ENCODE measurements at regions of chr6 and their contacts with region 1.

Region 1: GRCh38 chr6:37018198-37019064 is 13.0 kb downstream of the FGD2 start:
- DNase-seq: peak; percentile 96
- ATAC-seq: peak; percentile 95
- H3K4me3 Mint-ChIP-seq: no peak overlapping the region
- H3K27ac Mint-ChIP-seq: peak overlapping the region; percentile 62
- H3K4me1 Mint-ChIP-seq: peaks cover 56% of the 10 kb centered on the region
- H3K27me3 Mint-ChIP-seq: no peaks in the 10 kb centered on the region

Region 2: DNA sequence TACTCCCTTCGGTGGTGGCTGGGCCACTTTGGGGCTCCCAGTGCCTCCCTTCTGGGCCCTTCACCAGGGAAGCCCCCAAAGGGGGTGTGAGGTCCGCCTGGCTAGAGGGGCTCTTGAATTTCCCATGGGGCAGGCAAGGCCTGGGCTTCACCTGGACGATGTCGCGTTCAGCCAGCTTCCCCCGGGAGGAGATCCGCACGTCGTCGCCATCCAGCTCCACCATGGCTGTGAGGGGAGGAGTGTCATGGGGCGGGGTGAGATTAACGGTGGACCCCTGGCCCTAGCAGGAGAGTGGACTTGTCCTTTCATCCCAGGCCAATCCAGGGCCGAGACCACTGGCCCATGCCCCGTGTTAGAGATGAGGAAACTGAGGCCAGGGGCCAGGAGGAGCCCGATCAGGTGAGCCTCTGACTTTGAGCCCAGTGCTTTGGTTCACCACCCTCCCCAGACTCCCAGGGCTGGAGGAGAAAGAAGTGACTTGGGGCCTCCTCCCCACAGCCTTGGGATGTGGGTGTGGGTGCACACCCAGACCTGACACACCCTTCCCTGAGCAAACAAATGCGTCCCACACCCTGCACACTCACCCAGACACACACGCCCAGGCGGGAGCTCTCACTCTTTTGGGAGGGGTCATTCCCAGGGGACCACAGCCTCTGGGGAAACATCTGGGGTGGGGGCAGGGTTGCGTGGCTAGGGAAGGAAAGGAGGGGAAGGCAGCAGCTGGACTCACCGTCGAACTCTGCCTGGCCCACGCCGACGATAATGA is 274.7 kb before region 1 on chr6:
- CTCF ChIA-PET with region 1: no interaction called
- POLR2A ChIA-PET with region 1: no interaction called
- DNase-seq: no peak
- ATAC-seq: no peak
- H3K4me3 Mint-ChIP-seq: no peak overlapping the region
- H3K27ac Mint-ChIP-seq: no peak overlapping the region
- H3K4me1 Mint-ChIP-seq: peaks cover 17% of the 10 kb centered on the region
- H3K27me3 Mint-ChIP-seq: no peaks in the 10 kb centered on the region

Region 3: DNA sequence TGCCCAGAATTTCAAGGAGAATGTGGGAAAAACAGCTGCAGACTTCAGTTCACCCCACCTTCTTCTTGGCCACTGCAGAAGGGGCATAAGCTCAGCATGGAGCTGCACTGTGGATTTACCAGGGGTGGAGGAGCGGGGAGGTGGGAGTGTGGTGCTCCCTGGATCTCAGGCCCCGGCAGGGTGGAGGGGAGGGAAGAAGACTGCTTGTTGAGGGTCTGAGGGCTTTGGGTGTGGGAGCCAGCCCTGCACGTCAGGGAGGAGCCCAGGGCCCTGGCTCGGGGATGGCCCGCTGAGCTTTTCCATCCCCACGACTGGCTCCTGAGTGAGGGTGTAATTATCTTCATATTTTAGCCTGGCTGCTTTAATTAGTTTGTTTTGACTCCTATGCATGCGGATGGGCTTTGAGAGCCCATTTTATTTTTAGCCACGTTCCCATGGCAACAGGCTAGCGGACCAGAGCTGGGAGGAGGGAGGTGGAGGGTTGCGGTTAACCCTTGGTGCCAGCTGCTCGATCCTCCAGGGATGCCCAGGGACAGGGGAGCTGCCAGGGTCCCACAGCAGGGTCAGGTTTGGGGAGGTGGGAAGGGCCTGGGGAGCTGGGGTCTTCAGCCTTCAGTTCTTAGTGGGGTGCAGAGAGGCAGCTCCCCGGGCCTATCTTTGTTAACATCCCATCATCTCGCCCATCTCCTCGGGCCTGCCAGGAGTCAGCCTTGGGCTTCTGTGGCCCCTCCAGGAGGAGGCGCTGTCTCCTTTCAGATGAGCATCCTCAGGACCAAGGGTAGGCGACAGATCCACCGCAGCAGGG is 252.6 kb before region 1 on chr6:
- CTCF ChIA-PET with region 1: interaction called, 183 read pairs
- POLR2A ChIA-PET with region 1: interaction called, 6 read pairs
- DNase-seq: peak; percentile 90
- ATAC-seq: peak; percentile 90
- H3K4me3 Mint-ChIP-seq: no peak overlapping the region
- H3K27ac Mint-ChIP-seq: peak overlapping the region; percentile 14
- H3K4me1 Mint-ChIP-seq: peaks cover 49% of the 10 kb centered on the region
- H3K27me3 Mint-ChIP-seq: no peaks in the 10 kb centered on the region

Region 4: GRCh38 chr6:36885461-36886401 is 132.7 kb before region 1 on chr6 and contains the start of gene C6orf89:
- CTCF ChIA-PET with region 1: interaction called, 176 read pairs
- POLR2A ChIA-PET with region 1: interaction called, 19 read pairs
- DNase-seq: peak; percentile 99
- ATAC-seq: peak; percentile 100
- H3K4me3 Mint-ChIP-seq: peak within 1 kb of the TSS; percentile 91
- H3K27ac Mint-ChIP-seq: peak within 1 kb of the TSS; percentile 87
- H3K4me1 Mint-ChIP-seq: peaks cover 35% of the 10 kb centered on the region
- H3K27me3 Mint-ChIP-seq: no peaks in the 10 kb centered on the region
- total RNA-seq, gene C6orf89: 40.0 to 41.1 TPM

Region 5: GRCh38 chr6:36979347-36979742 is 39.1 kb before region 1 on chr6:
- CTCF ChIA-PET with region 1: interaction called, 70 read pairs
- POLR2A ChIA-PET with region 1: interaction called, 4 read pairs
- DNase-seq: peak; percentile 67
- ATAC-seq: peak; percentile 67
- H3K4me3 Mint-ChIP-seq: no peak overlapping the region
- H3K27ac Mint-ChIP-seq: peak overlapping the region; percentile 31
- H3K4me1 Mint-ChIP-seq: peaks cover 34% of the 10 kb centered on the region
- H3K27me3 Mint-ChIP-seq: no peaks in the 10 kb centered on the region

Region 6: GRCh38 chr6:37038292-37039198 is 20.1 kb after region 1 on chr6:
- CTCF ChIA-PET with region 1: interaction called, 506 read pairs
- POLR2A ChIA-PET with region 1: interaction called, 3 read pairs
- DNase-seq: no peak
- ATAC-seq: no peak
- H3K4me3 Mint-ChIP-seq: no peak overlapping the region
- H3K27ac Mint-ChIP-seq: peak overlapping the region; percentile 71
- H3K4me1 Mint-ChIP-seq: peaks cover 72% of the 10 kb centered on the region
- H3K27me3 Mint-ChIP-seq: no peaks in the 10 kb centered on the region

Region 7: DNA sequence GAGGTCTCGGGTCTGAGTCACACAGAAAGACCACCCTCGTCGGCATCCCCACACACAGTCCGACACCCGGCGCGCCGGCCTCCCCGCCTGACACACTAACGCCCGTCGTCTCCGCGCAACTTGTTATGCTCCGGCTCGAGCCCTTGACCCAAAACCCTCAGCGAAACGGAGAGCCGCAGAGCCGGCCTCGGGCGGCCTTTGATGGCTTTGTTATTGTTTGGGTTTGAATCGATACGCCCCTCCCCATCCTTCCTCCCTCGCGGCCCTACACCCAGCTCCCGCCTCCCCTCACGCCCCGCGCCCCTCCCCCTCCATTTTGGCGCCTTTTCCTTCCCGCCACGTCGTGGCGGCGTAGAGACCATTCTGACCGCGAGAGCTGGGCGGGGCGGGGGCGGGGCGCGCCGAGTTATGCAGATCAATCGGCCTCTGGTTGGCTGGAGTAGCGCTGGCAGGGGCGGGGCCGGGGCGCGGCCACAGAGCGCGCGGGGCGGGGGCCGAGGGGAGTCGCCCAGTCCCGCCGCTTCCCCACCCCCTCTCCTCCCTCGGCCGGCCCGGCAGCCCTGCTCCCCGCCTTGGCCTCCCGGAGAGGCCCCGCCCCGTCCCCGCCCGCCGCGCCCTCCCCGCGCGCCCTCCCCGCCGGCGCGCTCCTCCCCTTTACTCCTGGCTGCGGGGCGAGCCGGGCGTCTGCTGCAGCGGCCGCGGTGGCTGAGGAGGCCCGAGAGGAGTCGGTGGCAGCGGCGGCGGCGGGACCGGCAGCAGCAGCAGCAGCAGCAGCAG is 151.3 kb after region 1 on chr6 and contains the start of gene PIM1:
- CTCF ChIA-PET with region 1: interaction called, 584 read pairs
- POLR2A ChIA-PET with region 1: interaction called, 330 read pairs
- DNase-seq: peak; percentile 100
- ATAC-seq: peak; percentile 82
- H3K4me3 Mint-ChIP-seq: peak within 1 kb of the TSS; percentile 100
- H3K27ac Mint-ChIP-seq: peak within 1 kb of the TSS; percentile 99
- H3K4me1 Mint-ChIP-seq: peaks cover 31% of the 10 kb centered on the region
- H3K27me3 Mint-ChIP-seq: peaks cover 4% of the 10 kb centered on the region
- total RNA-seq, gene PIM1: 432 to 449 TPM

Region 8: GRCh38 chr6:37257634-37258404 is 239.4 kb after region 1 on chr6 and contains the starts of genes TBC1D22B and TMEM217:
- CTCF ChIA-PET with region 1: interaction called, 10 read pairs
- POLR2A ChIA-PET with region 1: no interaction called
- DNase-seq: peak; percentile 98
- ATAC-seq: peak; percentile 100
- H3K4me3 Mint-ChIP-seq: peak within 1 kb of the TSS; percentile 93
- H3K27ac Mint-ChIP-seq: peak within 1 kb of the TSS; percentile 78
- H3K4me1 Mint-ChIP-seq: peaks cover 48% of the 10 kb centered on the region
- H3K27me3 Mint-ChIP-seq: no peaks in the 10 kb centered on the region
- total RNA-seq, gene TBC1D22B: 15.4 TPM
- total RNA-seq, gene TMEM217: 3.1 to 3.2 TPM

Region 9: DNA sequence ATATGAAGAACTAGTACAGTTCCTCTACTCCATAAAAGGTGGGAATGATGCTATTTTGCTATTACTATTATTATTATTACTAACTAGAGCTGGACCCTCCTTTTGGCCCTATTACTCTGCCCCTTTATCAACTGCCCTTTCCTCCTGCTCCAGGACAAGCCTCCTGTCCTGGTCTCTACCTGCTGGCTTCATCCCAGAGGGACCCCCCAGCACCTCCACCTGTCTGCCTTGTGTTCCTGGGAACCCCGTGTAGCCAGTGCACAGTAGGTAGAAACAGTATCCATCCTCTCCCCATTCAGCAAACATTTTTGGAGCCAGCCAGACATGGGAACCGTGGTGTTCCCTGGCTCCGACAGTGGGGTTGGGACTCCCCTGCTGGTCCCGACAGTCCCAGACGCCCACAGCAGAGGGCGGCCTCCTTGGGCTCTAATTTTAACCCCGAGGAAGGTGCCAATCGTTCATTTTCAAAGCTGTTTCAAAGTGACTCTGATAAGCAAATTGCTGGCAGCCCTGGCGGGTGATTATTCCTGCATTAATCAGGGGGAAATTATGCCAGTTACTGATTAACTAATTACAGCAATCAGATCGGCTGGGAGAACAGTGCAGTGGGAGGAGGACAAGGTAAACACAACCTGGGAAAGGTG is 723.4 kb after region 1 on chr6:
- CTCF ChIA-PET with region 1: no interaction called
- POLR2A ChIA-PET with region 1: no interaction called
- DNase-seq: no peak
- ATAC-seq: no peak
- H3K4me3 Mint-ChIP-seq: no peak overlapping the region
- H3K27ac Mint-ChIP-seq: no peak overlapping the region
- H3K4me1 Mint-ChIP-seq: no peaks in the 10 kb centered on the region
- H3K27me3 Mint-ChIP-seq: peaks cover 23% of the 10 kb centered on the region